K562 (cell line): ENCODE measurements at regions of chr17 and their contacts with region 1.

Region 1: DNA sequence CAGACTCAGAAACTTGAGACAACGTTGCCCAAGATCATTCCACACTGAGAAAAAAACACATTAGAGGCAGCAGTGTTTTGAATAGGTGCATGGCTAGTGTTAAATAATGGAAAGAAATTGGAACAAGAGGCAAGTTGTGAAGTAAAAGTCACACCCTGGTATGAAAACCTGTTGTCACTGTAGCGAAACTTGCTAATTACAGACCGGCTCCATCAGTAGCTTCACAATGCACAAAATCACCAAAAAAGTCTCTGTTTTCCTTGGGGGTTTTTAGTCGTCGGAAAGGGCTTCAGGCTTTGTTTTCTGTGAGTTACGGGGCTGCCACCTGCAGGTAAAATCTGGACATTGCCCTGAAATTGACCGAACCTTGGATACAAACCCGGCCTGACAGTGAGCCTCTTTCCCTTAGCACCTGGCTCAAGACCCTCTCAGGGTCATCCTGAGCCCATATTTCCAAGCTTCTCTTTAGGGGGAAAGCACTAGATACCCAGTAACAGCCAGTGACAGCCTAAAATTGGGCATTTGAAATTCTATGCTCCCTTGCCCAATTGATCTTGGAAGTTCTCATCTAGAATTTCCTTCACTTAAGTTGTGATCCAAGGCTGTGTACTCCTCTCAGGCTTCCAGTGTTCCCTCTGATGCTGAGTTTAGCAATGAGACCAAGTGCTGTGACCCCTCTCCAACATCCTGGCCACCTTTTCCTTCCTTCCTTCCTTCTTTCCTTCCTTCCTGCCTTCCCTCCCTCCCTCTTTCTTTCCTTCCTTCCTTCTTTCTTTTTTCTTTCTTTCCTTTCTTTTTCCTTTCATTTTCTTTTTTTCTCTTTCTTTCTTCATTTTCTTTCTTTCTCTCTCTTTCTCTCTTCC is 7.2 kb upstream of the GRB2 start:
- DNase-seq: peak; percentile 69 to 84 (median 72)
- ATAC-seq: peak; percentile 92
- H3K4me3 ChIP-seq: no peak overlapping the region
- H3K27ac ChIP-seq: no peak overlapping the region
- H3K4me1 ChIP-seq: no peaks in the 10 kb centered on the region
- H3K27me3 ChIP-seq: peaks cover 0 to 9% of the 10 kb centered on the region in 2 experiments; a peak in 2 of 5 replicates
- CTCF ChIP-seq: peak; percentile 88 to 92 (median 91)
- EP300 ChIP-seq: no peak
- POLR2A ChIP-seq: no peak
- RAD21 ChIP-seq: peak; percentile 94 to 98

Region 2: DNA sequence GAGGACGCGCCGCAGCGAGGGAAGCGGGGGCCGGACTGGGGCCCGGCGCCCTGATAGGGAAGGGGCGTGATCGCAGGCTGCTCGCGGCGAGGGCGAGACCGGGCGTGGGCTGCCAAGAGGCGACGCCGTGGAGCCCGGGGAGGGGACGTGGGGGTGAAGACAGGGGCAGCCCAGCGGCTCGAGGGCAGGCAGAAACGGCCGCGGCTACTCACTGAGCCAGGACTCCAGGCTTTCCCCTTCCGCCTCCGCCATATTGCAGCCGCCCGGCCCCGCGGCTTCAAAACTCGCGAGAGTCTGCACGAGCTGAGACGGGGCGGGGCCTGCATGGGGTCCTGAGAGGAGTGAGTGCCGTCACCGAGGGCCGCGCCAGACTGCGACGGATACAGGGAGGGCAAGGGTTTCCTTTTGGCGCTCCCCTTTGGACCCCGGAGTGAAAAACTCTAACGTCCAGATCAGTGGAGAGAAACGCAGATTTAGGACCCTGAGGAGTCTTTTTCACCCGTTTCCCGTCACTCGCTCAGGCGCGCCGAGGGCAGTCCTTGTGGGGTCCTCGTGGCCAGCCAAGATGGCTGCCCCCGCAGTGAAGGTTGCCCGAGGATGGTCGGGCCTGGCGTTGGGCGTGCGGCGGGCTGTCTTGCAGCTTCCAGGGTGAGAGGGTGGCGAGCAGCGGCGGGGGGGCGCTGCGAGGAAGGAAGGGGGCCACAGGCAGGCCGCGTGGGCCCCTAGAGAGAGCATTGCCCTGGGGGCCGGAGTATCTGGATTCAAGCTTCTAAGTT is 151.2 kb before region 1 on chr17 and contains the starts of genes GGA3 and MRPS7:
- CTCF ChIA-PET with region 1: interaction called, 3 read pairs
- POLR2A ChIA-PET with region 1: interaction called, 3 read pairs
- in situ Hi-C with region 1: loop called (anchors 10 kb)
- intact Hi-C with region 1: no loop called
- DNase-seq: peak; percentile 86 to 97 (median 94)
- ATAC-seq: peak; percentile 96
- H3K4me3 ChIP-seq: peak within 1 kb of the TSS; percentile 91
- H3K27ac ChIP-seq: peak within 1 kb of the TSS; percentile 93
- H3K4me1 ChIP-seq: peaks cover 20 to 23% of the 10 kb centered on the region in 2 experiments; a peak in 4 of 5 replicates
- H3K27me3 ChIP-seq: no peaks in the 10 kb centered on the region
- CTCF ChIP-seq: peak in 1 of 3 experiments; percentile 14; a peak in 2 of 6 replicates
- EP300 ChIP-seq: no peak
- POLR2A ChIP-seq: peak; percentile 95
- RAD21 ChIP-seq: 0 out of 4 replicates have a peak, but pooled peaks have one; percentile 2 to 16
- polyA plus RNA-seq, gene GGA3: 5.7 to 6.3 TPM
- polyA plus RNA-seq, gene MRPS7: 236 to 244 TPM

Region 3: DNA sequence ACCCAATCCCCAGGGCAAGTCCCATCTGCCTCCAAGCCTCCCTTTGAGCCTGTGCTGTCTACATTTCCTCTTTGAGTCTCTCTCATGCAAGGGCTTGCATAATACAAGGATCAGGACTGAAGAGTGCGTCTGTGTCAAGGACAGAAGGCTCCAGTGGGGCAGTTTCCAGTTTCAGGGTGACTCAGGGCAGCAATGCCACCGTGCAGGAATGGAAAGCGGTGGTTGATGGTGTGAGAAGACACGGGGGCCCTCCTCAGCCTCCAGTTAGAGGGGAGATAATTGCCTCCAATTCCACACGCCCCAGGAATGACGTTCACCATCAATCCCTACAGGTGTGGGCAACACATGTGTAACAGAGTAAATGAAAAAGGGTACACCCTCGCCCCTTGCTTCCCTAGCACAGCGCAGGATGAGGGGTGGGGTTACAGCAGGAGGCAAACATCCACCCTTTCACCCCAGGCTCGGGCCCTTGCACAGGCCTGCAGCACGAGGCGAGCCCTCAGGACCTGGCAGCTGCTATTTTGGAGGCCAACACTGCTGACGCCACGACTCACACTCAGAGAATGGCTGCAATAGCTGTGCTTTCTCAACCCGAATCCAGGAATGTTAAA is 98.6 kb before region 1 on chr17:
- CTCF ChIA-PET with region 1: no interaction called
- POLR2A ChIA-PET with region 1: interaction called, 4 read pairs
- in situ Hi-C with region 1: loop called (anchors 5 kb)
- intact Hi-C with region 1: no loop called
- DNase-seq: no peak
- ATAC-seq: no peak
- H3K4me3 ChIP-seq: no peak overlapping the region
- H3K27ac ChIP-seq: no peak overlapping the region
- H3K4me1 ChIP-seq: peaks cover 0 to 19% of the 10 kb centered on the region in 2 experiments; a peak in 4 of 5 replicates
- H3K27me3 ChIP-seq: no peaks in the 10 kb centered on the region
- CTCF ChIP-seq: no peak
- EP300 ChIP-seq: no peak
- POLR2A ChIP-seq: no peak
- RAD21 ChIP-seq: no peak

Region 4: GRCh38 chr17:75319904-75320691 is 92.6 kb before region 1 on chr17:
- CTCF ChIA-PET with region 1: interaction called, 23 read pairs
- POLR2A ChIA-PET with region 1: interaction called, 4 read pairs
- in situ Hi-C with region 1: no loop called
- intact Hi-C with region 1: no loop called
- DNase-seq: no peak
- ATAC-seq: no peak
- H3K4me3 ChIP-seq: no peak overlapping the region
- H3K27ac ChIP-seq: no peak overlapping the region
- H3K4me1 ChIP-seq: peaks cover 4 to 15% of the 10 kb centered on the region in 2 experiments; a peak in 4 of 5 replicates
- H3K27me3 ChIP-seq: no peaks in the 10 kb centered on the region
- CTCF ChIP-seq: no peak
- EP300 ChIP-seq: no peak
- POLR2A ChIP-seq: no peak
- RAD21 ChIP-seq: no peak

Region 5: DNA sequence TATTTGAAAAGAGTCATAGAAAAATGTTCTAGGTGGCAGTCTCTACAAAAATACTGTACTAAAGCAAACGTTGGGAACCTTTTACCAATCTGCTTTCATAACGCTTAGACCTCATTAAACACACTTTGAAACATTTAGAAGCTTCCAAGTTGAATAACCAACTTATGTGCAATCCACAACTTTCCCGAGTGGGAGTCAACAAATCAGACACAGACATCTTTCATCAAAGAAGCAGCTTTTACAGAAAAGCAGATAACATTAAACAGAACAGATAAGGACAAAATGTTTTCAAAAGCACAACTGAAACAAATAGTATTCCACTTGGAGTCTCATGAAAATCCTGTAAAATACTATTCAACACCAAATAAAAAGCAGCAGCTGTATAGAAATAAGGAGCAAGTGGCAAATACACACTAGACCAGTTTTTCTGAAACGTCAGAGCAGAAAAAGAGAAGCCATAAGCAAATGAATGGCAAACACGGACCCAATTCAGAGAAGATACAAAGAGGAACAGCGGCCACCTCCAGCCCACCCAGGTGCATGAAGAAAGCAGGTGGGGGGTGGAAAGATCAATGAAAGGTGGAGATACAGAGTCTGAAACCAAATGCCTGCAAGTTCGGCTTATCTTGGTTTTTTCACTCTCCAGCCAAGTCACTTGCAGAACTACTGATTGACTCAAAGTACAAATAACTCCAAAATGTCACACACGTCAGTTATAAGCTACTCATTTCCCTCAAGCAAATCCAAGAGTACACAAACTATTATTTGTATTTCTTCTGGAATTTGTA is 546.6 kb after region 1 on chr17:
- CTCF ChIA-PET with region 1: no interaction called
- POLR2A ChIA-PET with region 1: no interaction called
- in situ Hi-C with region 1: no loop called
- intact Hi-C with region 1: no loop called
- DNase-seq: no peak
- ATAC-seq: peak; percentile 57
- H3K4me3 ChIP-seq: no peak overlapping the region
- H3K27ac ChIP-seq: no peak overlapping the region
- H3K4me1 ChIP-seq: peaks cover 3 to 14% of the 10 kb centered on the region in 2 experiments; a peak in 4 of 5 replicates
- H3K27me3 ChIP-seq: no peaks in the 10 kb centered on the region
- CTCF ChIP-seq: no peak
- EP300 ChIP-seq: no peak
- POLR2A ChIP-seq: no peak
- RAD21 ChIP-seq: no peak